ENCODE measurements at regions of chr22 and their contacts with region 1.

Region 1: DNA sequence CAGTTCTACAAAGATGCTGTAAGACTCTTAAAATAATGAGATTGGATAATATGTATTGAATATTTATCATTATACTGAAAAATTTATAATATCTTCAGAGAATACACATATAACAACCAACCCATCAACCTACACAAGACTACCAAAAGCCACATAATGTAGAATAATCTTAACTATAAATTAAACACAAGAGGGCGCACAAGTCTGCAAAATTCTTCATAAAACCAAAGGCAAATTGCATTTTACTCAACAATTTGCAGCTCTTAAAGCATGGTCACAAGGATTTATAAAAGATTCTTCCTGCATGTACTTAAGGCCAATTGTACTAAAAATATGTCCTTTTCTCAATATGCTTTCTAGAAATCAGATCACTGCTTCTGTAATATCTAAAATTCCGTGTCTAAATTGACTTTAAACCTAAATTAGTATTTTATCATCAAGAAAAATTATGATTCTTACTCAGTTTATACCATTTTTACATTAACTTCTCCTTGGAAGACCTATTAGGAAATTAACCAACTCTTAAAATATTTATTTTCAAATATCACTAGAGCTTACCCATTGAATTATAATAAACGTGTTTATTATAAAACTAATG is 79.0 kb downstream of the TTC28 start:
- H3K4me3 Mint-ChIP-seq: no peak overlapping the region
- H3K27ac Mint-ChIP-seq: no peak overlapping the region
- H3K4me1 Mint-ChIP-seq: no peaks in the 10 kb centered on the region
- H3K27me3 Mint-ChIP-seq: no peaks in the 10 kb centered on the region

Region 2: DNA sequence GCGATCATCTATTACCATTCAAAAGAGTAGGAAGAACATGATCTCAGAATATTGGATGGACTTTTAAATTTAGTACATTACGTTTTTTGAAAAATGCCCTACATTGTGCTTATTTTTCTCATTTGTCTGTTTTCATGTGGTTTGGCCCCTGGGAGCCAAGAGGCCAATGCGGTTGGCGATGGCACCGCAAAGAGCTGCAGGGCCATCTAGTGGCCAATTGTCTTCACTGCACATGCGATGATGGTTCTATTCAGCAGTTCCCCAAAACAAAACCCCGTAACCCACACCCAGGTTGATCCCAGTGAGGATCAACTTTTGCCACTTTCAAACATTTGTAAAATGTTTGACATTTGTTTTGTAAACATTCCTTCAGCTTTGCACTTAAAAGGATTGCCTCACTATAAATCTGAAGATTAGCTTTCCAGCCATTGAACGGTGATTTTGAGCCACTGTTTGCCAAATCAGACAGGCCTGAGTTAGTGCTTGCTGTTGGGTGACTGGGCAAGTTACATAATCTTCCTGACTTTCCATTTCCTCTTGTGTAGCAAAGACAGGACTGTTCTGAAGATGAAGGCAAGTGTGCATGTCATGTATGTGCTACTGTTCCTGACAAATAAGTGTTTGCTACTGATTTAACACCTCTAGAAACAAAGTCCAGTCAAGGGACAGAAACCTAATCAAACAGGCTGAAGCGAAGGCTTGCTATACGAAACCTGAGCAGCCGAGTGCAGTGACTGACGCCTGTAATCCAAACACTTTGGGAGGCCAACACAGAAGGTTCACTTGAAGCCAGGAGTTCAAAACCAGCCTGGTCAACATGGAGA is 228.9 kb after region 1 on chr22:
- intact Hi-C with region 1: loop called (anchors 1 kb)
- H3K4me3 Mint-ChIP-seq: no peak overlapping the region
- H3K27ac Mint-ChIP-seq: peak overlapping the region; percentile 14
- H3K4me1 Mint-ChIP-seq: peaks cover 32% of the 10 kb centered on the region
- H3K27me3 Mint-ChIP-seq: no peaks in the 10 kb centered on the region

Region 3: GRCh38 chr22:29040385-29041275 is 440.0 kb after region 1 on chr22:
- intact Hi-C with region 1: loop called (anchors 1 kb)
- H3K4me3 Mint-ChIP-seq: no peak overlapping the region
- H3K27ac Mint-ChIP-seq: no peak overlapping the region
- H3K4me1 Mint-ChIP-seq: no peaks in the 10 kb centered on the region
- H3K27me3 Mint-ChIP-seq: no peaks in the 10 kb centered on the region

Region 4: GRCh38 chr22:29245637-29246385 is 645.2 kb after region 1 on chr22:
- intact Hi-C with region 1: loop called (anchors 1 kb)
- H3K4me3 Mint-ChIP-seq: no peak overlapping the region
- H3K27ac Mint-ChIP-seq: no peak overlapping the region
- H3K4me1 Mint-ChIP-seq: no peaks in the 10 kb centered on the region
- H3K27me3 Mint-ChIP-seq: no peaks in the 10 kb centered on the region

Measured in dendritic cell treated with granulocyte-macrophage colony-stimulating factor and Interleukin-4, amounts not matched to agents 40 ng/mL and 50 ng/mL, for 4 days (primary cell).